ENCODE measurements at regions of chr9 and their contacts with region 1.

Region 1: GRCh38 chr9:4679268-4680172 is at the start of gene CDC37L1:
- DNase-seq: peak; percentile 99
- total RNA-seq, gene CDC37L1: 43.0 TPM

Region 2: GRCh38 chr9:4662108-4662988 is 17.2 kb before region 1 on chr9 and contains the start of gene PLPP6:
- intact Hi-C with region 1: loop called (anchors 2 kb)
- DNase-seq: peak; percentile 94
- total RNA-seq, gene PLPP6: 2.7 TPM

Region 3: GRCh38 chr9:4740638-4741364 is 61.3 kb after region 1 on chr9 and contains the start of gene AK3:
- intact Hi-C with region 1: loop called (anchors 5 kb)
- DNase-seq: peak; percentile 92
- total RNA-seq, gene AK3: 108 TPM